A549 (cell line): ENCODE measurements at regions of chr13 and their contacts with region 1.

Region 1: DNA sequence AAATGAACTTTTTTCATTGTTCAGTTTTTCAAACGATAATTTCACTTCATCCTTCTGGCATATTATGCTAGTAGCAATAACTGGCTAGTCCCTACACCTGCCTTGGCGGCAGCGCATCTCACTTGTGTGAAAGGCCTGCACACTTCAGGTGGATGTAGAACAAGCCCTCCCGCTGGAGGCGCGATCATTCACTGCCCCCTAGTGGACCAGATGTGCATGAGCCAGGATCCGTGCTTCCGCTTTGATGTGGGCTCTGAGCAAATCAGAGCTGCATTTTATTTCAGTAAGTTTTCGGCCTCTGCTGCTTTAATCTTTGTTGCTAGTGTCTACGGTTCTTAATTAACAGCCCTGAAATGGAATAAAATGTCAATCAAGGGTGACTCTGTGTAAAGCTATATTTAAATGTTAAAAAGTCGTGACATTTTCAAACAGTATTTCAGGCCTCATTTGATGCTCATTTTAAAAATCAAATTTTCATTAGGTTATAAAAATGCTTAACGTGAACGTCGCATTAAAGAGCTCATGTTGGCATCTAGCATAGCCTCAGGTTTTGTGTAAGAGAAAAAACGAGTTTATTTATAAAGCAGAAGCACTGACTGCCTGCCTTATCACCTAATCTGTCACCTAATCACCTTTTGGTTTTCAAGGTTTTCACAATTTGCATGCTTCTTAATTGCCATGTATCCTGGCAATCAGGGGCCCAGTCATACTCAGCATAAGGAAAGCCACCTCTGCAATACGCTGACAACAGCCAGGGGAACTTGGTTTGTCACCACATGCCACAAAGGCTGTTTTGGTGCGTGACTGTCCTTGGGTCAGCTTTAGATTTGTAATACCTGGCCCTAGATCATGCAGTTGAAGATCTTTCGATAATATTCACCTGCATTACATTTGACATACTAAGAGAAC is 112.2 kb downstream of the TEX26 start:
- DNase-seq: peak; percentile 48 to 78
- ATAC-seq: peak; percentile 88 to 90
- H3K4me3 ChIP-seq: no peak overlapping the region
- H3K27ac ChIP-seq: peak overlapping the region; percentile 92 to 93
- H3K4me1 ChIP-seq: peaks cover 24% of the 10 kb centered on the region
- CTCF ChIP-seq: peak; percentile 75
- EP300 ChIP-seq: no peak
- POLR2A ChIP-seq: no peak
- RAD21 ChIP-seq: peak; percentile 84 to 92

Region 2: DNA sequence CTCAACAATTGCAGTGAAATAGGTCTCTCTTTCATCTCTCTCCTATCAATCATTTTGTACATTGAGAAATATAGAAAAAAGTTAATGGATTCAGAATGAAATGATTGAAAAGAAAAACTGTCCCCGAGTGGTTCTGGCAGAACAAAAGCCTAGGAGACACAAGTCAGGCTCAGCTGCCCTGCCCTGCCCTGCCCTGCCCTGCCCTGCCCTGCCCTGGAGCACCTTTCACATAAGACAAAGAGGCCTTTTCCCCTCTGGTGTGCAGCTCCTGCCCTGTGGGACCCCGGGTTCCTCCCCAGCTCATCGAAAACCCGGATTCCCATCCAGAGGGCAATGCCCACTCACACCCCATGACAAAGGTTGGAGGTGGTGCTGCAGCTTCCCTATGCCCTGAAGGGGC is 17.5 kb before region 1 on chr13:
- CTCF ChIA-PET with region 1: interaction called, 11 read pairs
- POLR2A ChIA-PET with region 1: no interaction called
- DNase-seq: no peak
- ATAC-seq: no peak
- H3K4me3 ChIP-seq: no peak overlapping the region
- H3K27ac ChIP-seq: no peak overlapping the region
- H3K4me1 ChIP-seq: no peaks in the 10 kb centered on the region
- CTCF ChIP-seq: no peak
- EP300 ChIP-seq: no peak
- POLR2A ChIP-seq: no peak
- RAD21 ChIP-seq: no peak